PC-3 (cell line): ENCODE measurements at regions of chr12 and their contacts with region 1.

Region 1: DNA sequence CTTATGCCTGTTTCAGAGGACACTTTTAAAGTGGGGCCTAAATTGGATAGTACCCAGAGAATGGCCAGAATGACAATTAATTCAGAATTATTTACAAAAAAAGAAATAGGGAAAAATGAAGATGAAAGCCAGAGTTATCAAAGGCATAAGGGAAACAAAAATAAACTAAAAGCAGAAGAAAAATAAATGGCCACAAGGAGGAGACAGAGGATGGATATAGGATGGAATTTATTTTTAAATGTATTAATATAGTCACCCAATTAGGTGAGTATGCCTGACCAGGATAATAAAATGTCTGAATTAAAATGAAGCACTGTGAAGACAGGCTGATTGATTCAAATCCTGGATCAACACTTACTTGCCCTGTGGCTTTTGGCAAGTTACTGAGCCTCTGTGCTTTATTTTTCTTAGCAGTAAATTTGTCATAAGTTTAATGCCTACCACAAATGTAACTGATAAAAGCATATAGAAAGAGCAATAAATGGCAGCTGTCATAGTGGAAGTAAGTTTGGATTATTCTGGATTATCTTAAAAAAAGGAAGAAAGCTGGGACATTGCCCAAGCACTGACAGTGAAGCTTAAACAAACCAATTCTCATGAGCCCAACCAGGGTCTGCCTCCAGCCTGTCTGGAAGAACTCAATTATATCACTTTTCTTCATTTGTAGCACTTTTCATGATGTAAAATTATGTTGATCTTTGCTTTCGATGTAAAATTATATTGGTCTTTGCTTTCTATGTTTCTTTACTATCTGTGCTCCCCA is 3.5 kb downstream of the CLEC9A start:
- DNase-seq: peak; percentile 42
- ATAC-seq: no peak
- H3K4me3 ChIP-seq: no peak overlapping the region
- H3K27ac ChIP-seq: no peak overlapping the region
- H3K4me1 ChIP-seq: peaks cover 16% of the 10 kb centered on the region
- H3K27me3 ChIP-seq: no peaks in the 10 kb centered on the region
- CTCF ChIP-seq: peak; percentile 65

Region 2: DNA sequence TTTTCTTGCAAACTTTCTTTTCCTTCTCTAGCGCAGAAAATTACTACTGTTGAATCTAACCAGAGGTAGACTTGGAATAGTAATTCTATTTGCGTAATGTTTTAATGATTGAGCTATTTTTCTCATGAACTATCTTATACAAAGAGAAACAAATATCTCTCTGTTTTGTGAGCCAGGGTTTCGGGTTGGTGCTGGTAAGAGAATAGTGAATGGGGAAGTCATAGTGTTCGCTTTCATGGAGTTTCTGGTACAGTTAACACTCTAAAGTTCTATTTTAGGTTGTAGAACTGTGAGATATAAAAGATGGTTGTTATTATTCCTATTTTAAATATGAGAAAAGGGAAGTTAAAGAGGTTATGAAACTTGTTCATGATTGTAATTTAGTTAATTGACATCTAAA is 41.7 kb before region 1 on chr12:
- CTCF ChIA-PET with region 1: no interaction called
- POLR2A ChIA-PET with region 1: no interaction called
- intact Hi-C with region 1: no loop called
- DNase-seq: no peak
- ATAC-seq: no peak
- H3K4me3 ChIP-seq: no peak overlapping the region
- H3K27ac ChIP-seq: no peak overlapping the region
- H3K4me1 ChIP-seq: no peaks in the 10 kb centered on the region
- H3K27me3 ChIP-seq: peaks cover 42% of the 10 kb centered on the region
- CTCF ChIP-seq: no peak

Region 3: DNA sequence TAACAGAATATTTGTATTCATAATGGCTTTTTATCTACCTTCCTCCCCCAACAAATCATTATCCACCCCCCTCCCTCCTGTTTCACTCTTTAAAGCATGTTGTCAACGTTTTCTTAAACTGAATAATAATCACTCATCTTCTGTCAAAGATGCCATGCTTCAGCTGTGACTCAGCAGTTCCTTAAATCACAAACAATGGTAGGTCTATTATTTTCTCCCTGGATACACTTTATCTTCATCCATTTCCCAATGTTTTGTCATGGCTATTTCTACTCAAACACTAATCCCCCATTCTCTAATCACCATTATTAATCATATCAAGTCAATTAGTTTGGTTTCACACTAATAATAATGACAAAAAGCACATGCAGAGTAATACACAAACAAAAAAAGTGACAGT is 17.1 kb before region 1 on chr12:
- CTCF ChIA-PET with region 1: no interaction called
- POLR2A ChIA-PET with region 1: interaction called, 4 read pairs
- intact Hi-C with region 1: loop called (anchors 2 kb)
- DNase-seq: peak; percentile 54
- ATAC-seq: peak; percentile 65
- H3K4me3 ChIP-seq: no peak overlapping the region
- H3K27ac ChIP-seq: peak overlapping the region; percentile 21; the same call in 1 of the 2 replicates
- H3K4me1 ChIP-seq: peaks cover 11% of the 10 kb centered on the region
- H3K27me3 ChIP-seq: no peaks in the 10 kb centered on the region
- CTCF ChIP-seq: no peak

Region 4: GRCh38 chr12:10082117-10082874 is 48.3 kb after region 1 on chr12:
- CTCF ChIA-PET with region 1: no interaction called
- POLR2A ChIA-PET with region 1: no interaction called
- intact Hi-C with region 1: no loop called
- DNase-seq: no peak
- ATAC-seq: no peak
- H3K4me3 ChIP-seq: no peak overlapping the region
- H3K27ac ChIP-seq: no peak overlapping the region
- H3K4me1 ChIP-seq: no peaks in the 10 kb centered on the region
- H3K27me3 ChIP-seq: no peaks in the 10 kb centered on the region
- CTCF ChIP-seq: no peak

Region 5: DNA sequence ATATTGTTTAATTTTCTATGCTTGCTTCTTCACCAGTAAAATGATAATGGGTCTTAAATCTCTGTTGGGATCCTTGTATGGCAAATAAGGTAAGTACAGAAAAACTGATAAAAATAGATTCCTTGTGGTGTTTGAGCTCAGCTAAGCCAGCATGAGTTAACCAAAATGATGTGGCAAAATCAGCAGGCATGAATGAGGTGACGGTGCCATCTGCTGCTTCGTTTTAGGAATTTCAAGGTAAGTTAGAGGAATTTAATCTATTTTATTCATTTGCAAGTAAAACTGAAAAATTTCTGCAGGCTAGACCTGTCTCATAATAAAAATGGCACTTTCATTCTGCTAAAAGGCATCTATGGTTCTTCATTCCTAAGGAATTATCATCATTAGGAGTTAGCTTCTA is 106.0 kb after region 1 on chr12:
- CTCF ChIA-PET with region 1: no interaction called
- POLR2A ChIA-PET with region 1: no interaction called
- intact Hi-C with region 1: loop called (anchors 1 kb)
- DNase-seq: peak; percentile 63
- ATAC-seq: peak; percentile 46
- H3K4me3 ChIP-seq: no peak overlapping the region
- H3K27ac ChIP-seq: no peak overlapping the region
- H3K4me1 ChIP-seq: no peaks in the 10 kb centered on the region
- H3K27me3 ChIP-seq: no peaks in the 10 kb centered on the region
- CTCF ChIP-seq: peak; percentile 71

Region 6: DNA sequence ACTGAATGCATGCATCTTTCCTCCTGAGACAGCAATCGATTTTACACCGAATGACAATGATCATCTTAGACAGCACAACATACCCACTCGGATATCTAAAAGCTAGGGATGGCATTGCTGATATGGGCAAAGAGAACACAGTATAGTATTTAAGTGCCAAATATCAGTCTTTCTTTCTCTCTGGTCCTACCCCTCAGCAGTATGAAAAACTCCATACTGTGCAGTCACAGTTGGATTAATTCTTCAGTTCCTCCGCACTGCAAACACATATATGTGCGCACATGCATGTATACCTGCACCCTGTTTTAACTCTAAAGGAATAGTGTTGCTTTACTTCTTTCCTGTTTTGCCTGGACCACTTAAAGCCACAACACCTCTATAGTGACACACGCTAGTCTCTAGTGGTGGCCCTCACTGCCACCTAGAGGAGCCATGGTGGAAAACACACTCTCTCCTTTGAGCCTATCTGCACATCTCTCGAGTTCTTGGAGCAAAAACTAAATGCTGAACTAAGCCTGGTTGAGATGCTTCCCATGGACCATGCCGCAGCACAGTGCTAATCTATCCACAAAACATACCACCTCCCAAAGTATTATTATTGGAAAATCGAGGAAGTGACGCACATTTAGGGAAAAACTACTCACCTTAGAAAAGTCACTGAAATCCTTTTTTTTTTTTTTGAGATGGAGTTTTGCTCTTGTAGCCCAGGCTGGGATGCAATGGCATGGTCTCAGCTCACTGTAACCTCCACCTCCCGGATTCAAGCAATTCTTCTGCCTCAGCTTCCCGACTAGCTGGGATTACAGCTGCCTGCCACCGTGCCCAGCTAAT is 156.8 kb after region 1 on chr12:
- CTCF ChIA-PET with region 1: no interaction called
- POLR2A ChIA-PET with region 1: no interaction called
- intact Hi-C with region 1: loop called (anchors 5 kb)
- DNase-seq: peak; percentile 82
- ATAC-seq: peak; percentile 77
- H3K4me3 ChIP-seq: no peak overlapping the region
- H3K27ac ChIP-seq: peak overlapping the region; percentile 66
- H3K4me1 ChIP-seq: peaks cover 41% of the 10 kb centered on the region
- H3K27me3 ChIP-seq: no peaks in the 10 kb centered on the region
- CTCF ChIP-seq: peak; percentile 78